ENCODE measurements at regions of chr21 and their contacts with region 1.

Region 1: GRCh38 chr21:25188677-25189079 is 418.6 kb downstream of the MRPL39 start:
- DNase-seq: peak; percentile 12
- H3K4me3 Mint-ChIP-seq: no peak overlapping the region
- H3K27ac Mint-ChIP-seq: no peak overlapping the region
- H3K4me1 Mint-ChIP-seq: no peaks in the 10 kb centered on the region
- H3K27me3 Mint-ChIP-seq: no peaks in the 10 kb centered on the region

Region 2: DNA sequence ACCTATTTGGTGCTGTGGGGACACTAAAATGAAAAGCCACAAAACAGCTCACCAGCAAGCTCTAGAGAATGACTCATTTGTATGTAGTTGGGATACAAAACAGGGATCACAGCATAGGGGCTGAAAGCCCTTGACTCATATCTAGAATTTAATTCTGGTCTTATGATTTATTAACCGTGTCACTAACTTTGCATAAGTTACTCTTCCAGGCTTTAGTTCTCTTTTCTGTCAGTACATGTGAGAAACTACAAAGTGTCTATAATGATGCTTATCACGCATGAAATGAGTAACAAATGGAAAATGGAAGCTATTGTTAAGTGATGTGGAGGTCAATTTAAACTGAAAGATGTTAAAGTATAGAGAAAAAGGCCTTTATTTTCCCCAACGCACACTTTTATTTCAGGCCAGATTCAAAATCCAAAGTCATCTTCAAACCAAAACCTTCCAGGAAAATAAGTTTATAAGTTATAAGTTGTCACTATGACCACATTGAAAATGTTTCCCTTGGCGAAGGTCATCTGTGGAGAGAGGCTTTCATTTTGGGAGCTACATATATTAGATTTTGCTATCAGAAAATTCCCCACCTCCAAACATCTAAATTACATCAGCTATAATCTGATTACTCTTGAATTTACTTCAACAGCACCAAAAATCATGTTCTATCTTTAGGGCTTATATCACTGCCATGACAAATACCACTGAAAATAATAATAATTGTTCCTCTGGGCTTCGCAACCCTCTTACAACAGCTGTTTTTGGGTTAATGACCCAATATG is 11.9 kb before region 1 on chr21:
- CTCF ChIA-PET with region 1: no interaction called
- POLR2A ChIA-PET with region 1: no interaction called
- intact Hi-C with region 1: loop called (anchors 1 kb)
- DNase-seq: no peak
- H3K4me3 Mint-ChIP-seq: no peak overlapping the region
- H3K27ac Mint-ChIP-seq: no peak overlapping the region
- H3K4me1 Mint-ChIP-seq: peaks cover 3% of the 10 kb centered on the region
- H3K27me3 Mint-ChIP-seq: no peaks in the 10 kb centered on the region

Region 3: GRCh38 chr21:25199944-25200343 is 11.3 kb after region 1 on chr21:
- CTCF ChIA-PET with region 1: no interaction called
- POLR2A ChIA-PET with region 1: no interaction called
- intact Hi-C with region 1: no loop called
- DNase-seq: no peak
- H3K4me3 Mint-ChIP-seq: no peak overlapping the region
- H3K27ac Mint-ChIP-seq: no peak overlapping the region
- H3K4me1 Mint-ChIP-seq: no peaks in the 10 kb centered on the region
- H3K27me3 Mint-ChIP-seq: no peaks in the 10 kb centered on the region

Region 4: GRCh38 chr21:25360593-25360992 is 171.9 kb after region 1 on chr21:
- CTCF ChIA-PET with region 1: no interaction called
- POLR2A ChIA-PET with region 1: no interaction called
- intact Hi-C with region 1: no loop called
- DNase-seq: peak; percentile 13
- H3K4me3 Mint-ChIP-seq: no peak overlapping the region
- H3K27ac Mint-ChIP-seq: no peak overlapping the region
- H3K4me1 Mint-ChIP-seq: peaks cover 18% of the 10 kb centered on the region
- H3K27me3 Mint-ChIP-seq: peaks cover 2% of the 10 kb centered on the region